Upper lobe of right lung (tissue), 1 donor: ENCODE measurements at regions of chr15 and their contacts with region 1.

Region 1: GRCh38 chr15:57306161-57306943 is 70.0 kb upstream of the CGNL1 start:
- DNase-seq: peak; percentile 94
- ATAC-seq: peak; percentile 95
- H3K4me3 ChIP-seq: peak overlapping the region; percentile 56
- H3K27ac ChIP-seq: peak overlapping the region; percentile 61
- H3K4me1 ChIP-seq: peaks cover 7% of the 10 kb centered on the region
- H3K27me3 ChIP-seq: no peaks in the 10 kb centered on the region
- CTCF ChIP-seq: peak; percentile 91

Region 2: DNA sequence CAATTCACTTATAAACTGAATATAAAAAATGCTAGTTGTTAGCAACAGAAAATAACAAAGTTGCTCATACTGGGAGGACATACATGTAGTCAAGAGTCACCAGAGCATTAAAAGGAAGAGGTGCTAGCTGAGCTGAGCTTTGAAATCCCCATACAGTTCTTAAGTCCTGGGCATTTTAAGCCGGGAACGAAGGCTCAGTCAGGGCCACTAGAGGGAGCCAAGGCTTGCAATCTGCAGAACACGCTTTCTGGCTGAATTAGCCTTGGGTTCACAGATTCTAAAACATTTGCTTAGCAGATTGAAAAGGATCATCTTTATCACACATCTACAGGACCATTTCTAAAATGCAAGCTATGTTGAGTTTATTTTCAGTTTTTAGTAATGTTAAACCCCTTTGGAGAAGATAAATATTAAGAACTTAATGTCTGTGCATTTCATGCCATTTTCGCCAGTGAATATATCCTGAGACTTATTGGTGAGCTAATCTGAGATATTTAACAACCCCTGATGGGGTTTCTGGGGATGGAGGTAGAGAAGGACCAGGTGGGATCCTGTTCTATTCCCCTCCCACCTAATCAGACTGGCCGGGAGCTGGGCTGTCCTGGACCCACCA is 815.1 kb before region 1 on chr15:
- intact Hi-C with region 1: loop called (anchors 10 kb)
- DNase-seq: no peak
- ATAC-seq: peak; percentile 82
- H3K4me3 ChIP-seq: no peak overlapping the region
- H3K27ac ChIP-seq: no peak overlapping the region
- H3K4me1 ChIP-seq: no peaks in the 10 kb centered on the region
- H3K27me3 ChIP-seq: no peaks in the 10 kb centered on the region
- CTCF ChIP-seq: peak; percentile 86

Region 3: DNA sequence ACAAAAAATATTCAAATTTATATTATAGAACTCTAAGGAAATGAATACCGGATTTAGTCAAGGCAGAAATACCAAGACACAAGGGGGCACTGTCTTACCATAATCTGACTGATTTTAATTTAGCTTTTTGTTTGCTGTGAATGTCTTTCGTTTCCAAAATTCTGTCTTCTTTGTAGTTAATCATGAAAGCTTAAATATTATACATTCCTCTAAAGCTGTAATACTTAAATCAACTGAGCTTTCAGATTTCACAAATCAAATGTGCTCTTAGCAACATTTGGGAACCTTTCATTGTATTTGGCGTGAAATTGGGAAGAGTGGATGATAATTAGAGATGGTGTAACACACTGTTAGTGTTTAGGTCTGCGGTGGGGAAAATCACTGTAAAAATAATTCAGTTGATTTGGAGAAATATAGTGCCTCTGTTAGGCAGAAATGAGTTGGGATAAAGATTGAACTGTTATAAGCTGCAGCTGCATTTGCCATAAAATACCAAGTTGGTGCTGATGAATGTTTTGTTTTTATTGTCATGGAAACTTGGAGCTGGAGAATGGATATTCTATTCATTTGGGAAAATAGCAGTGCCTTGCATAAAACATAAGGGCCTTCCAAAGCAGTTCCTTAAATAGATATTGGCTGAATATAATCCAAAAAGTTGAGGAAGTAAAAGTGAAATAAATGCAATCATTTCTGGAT is 159.7 kb before region 1 on chr15:
- intact Hi-C with region 1: loop called (anchors 10 kb)
- DNase-seq: no peak
- ATAC-seq: peak; percentile 60
- H3K4me3 ChIP-seq: no peak overlapping the region
- H3K27ac ChIP-seq: no peak overlapping the region
- H3K4me1 ChIP-seq: peaks cover 32% of the 10 kb centered on the region
- H3K27me3 ChIP-seq: no peaks in the 10 kb centered on the region
- CTCF ChIP-seq: peak; percentile 80

Region 4: DNA sequence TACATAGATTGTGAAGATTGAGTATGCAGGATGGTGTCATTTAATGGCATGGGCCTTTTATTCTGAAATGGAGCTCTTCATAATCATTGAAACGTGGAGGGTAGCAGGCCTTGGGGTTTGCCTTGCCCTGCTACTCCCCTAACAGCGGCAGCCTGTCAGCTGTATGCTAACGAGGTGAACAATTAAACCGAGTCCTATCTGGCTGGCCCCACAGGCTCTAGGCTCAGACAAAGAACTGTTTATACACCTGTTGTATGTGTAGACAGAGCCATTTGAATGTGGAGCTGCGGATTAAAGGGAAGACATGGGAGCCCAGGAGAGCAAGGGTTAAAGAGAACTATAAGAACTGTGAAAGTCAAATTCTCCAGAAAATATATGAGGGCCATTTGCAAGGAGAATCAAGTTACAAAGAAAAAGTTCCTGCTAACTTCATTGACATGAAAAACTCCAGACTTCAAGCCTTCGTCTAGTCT is 46.7 kb before region 1 on chr15:
- intact Hi-C with region 1: no loop called
- DNase-seq: no peak
- ATAC-seq: no peak
- H3K4me3 ChIP-seq: no peak overlapping the region
- H3K27ac ChIP-seq: no peak overlapping the region
- H3K4me1 ChIP-seq: no peaks in the 10 kb centered on the region
- H3K27me3 ChIP-seq: no peaks in the 10 kb centered on the region
- CTCF ChIP-seq: no peak